CD8-positive, alpha-beta memory T cell (primary cell): ENCODE measurements at regions of chr7 and their contacts with region 1.

Region 1: DNA sequence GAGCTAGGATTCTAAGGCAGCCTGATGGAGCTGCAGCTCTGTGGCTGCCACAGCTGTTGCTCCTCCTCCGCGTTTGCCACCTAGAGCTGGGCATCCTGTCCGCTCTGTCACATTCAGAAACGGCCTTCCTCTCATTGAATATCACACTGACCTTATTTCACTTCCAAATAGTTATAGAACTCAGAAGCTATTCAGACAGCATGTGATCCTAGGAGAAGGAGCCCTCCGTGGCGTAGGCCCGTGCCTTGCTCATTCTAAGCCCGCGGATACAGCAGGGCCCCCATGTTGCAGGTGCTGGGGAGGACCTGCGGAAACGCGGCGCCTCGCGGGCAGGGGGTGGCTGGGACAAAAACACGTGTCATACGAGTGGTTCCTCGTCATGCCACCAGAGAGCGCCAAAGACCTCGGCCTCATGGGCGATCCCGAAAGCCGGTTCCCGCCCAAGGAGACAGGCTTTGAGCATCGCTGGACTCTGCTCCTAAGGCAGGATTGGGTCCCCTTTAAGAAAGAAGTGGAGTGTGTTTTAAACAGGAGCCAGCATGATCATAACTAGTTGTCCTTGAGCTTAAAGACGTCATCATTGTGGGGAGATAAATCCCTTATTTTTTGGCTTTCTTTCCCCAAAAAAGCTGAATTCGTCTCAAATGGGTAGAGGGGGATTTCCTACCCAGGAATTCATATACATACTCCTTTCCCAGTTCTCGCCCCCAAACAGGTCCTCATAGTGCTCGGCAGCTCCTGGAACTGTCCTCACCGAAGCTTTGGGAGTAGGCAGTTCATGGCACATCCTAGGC is 17.9 kb upstream of the FIGNL1 start:
- DNase-seq: peak; percentile 63 to 82 (median 65)
- H3K4me3 ChIP-seq: peak overlapping the region; percentile 15
- H3K4me3 Mint-ChIP-seq: peak overlapping the region in 6 of 7 donors; percentile 16 to 84 (median 67)
- H3K27ac ChIP-seq: no peak overlapping the region
- H3K27ac Mint-ChIP-seq: peak overlapping the region in 2 of 8 donors; percentile 70 to 95
- H3K4me1 ChIP-seq: peaks cover 5% of the 10 kb centered on the region
- H3K4me1 Mint-ChIP-seq: peaks cover 6 to 12% (median 11%) of the 10 kb centered on the region in 3 donors
- H3K27me3 ChIP-seq: no peaks in the 10 kb centered on the region
- H3K27me3 Mint-ChIP-seq: peaks cover 0 to 7% of the 10 kb centered on the region in 2 donors

Region 2: GRCh38 chr7:49776994-49777393 is 691.0 kb before region 1 on chr7:
- CTCF ChIA-PET with region 1: no interaction called
- POLR2A ChIA-PET with region 1: no interaction called
- DNase-seq: no peak
- H3K4me3 ChIP-seq: no peak overlapping the region
- H3K4me3 Mint-ChIP-seq: no peak overlapping the region
- H3K27ac ChIP-seq: no peak overlapping the region
- H3K27ac Mint-ChIP-seq: no peak overlapping the region
- H3K4me1 ChIP-seq: no peaks in the 10 kb centered on the region
- H3K4me1 Mint-ChIP-seq: peaks cover 4 to 6% (median 6%) of the 10 kb centered on the region in 3 donors
- H3K27me3 ChIP-seq: no peaks in the 10 kb centered on the region
- H3K27me3 Mint-ChIP-seq: peaks cover 25% of the 10 kb centered on the region in 2 donors

Region 3: DNA sequence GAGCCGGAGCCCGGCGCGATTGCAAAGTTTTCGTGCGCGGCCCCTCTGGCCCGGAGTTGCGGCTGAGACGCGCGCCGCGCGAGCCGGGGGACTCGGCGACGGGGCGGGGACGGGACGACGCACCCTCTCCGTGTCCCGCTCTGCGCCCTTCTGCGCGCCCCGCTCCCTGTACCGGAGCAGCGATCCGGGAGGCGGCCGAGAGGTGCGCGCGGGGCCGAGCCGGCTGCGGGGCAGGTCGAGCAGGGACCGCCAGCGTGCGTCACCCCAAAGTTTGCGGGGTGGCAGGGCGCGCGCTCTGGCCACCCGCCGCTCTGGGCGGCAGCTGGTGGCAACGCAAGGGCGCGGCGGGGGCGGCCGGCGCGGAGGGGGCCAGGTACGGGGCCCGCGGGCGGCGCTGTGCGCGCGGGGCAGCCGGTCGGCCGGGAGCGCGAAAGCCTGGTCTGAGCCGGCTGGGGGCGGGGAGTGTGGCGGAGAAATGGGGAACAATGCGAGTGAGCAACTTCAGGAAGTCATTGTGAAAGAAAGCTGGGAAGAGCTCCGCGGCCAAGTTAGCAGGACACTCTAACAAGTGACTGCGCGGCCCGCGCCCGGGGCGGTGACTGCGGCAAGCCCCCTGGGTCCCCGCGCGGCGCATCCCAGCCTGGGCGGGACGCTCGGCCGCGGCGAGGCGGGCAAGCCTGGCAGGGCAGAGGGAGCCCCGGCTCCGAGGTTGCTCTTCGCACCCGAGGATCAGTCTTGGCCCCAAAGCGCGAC is 163.7 kb before region 1 on chr7 and contains the start of gene IKZF1:
- CTCF ChIA-PET with region 1: no interaction called
- POLR2A ChIA-PET with region 1: no interaction called
- DNase-seq: peak; percentile 45 to 71 (median 53)
- H3K4me3 ChIP-seq: peak within 1 kb of the TSS; percentile 92
- H3K4me3 Mint-ChIP-seq: peak within 1 kb of the TSS; percentile 95 to 100 (median 99)
- H3K27ac ChIP-seq: peak within 1 kb of the TSS; percentile 86
- H3K27ac Mint-ChIP-seq: peak within 1 kb of the TSS; percentile 92 to 99 (median 98)
- H3K4me1 ChIP-seq: peaks cover 50% of the 10 kb centered on the region
- H3K4me1 Mint-ChIP-seq: peaks cover 44 to 60% (median 59%) of the 10 kb centered on the region in 3 donors
- H3K27me3 ChIP-seq: no peaks in the 10 kb centered on the region
- H3K27me3 Mint-ChIP-seq: peaks cover 0 to 2% of the 10 kb centered on the region in 2 donors
- total RNA-seq, gene IKZF1: 225 to 226 TPM

Region 4: GRCh38 chr7:50455658-50456057 is 12.4 kb before region 1 on chr7:
- CTCF ChIA-PET with region 1: interaction called, 14 read pairs
- POLR2A ChIA-PET with region 1: no interaction called
- DNase-seq: no peak
- H3K4me3 ChIP-seq: no peak overlapping the region
- H3K4me3 Mint-ChIP-seq: peak overlapping the region in 1 of 7 donors; percentile 67
- H3K27ac ChIP-seq: no peak overlapping the region
- H3K27ac Mint-ChIP-seq: peak overlapping the region in 2 of 8 donors; percentile 30 to 72
- H3K4me1 ChIP-seq: peaks cover 9% of the 10 kb centered on the region
- H3K4me1 Mint-ChIP-seq: peaks cover 6 to 12% (median 7%) of the 10 kb centered on the region in 3 donors
- H3K27me3 ChIP-seq: no peaks in the 10 kb centered on the region
- H3K27me3 Mint-ChIP-seq: peaks cover 6 to 8% of the 10 kb centered on the region in 2 donors

Region 5: DNA sequence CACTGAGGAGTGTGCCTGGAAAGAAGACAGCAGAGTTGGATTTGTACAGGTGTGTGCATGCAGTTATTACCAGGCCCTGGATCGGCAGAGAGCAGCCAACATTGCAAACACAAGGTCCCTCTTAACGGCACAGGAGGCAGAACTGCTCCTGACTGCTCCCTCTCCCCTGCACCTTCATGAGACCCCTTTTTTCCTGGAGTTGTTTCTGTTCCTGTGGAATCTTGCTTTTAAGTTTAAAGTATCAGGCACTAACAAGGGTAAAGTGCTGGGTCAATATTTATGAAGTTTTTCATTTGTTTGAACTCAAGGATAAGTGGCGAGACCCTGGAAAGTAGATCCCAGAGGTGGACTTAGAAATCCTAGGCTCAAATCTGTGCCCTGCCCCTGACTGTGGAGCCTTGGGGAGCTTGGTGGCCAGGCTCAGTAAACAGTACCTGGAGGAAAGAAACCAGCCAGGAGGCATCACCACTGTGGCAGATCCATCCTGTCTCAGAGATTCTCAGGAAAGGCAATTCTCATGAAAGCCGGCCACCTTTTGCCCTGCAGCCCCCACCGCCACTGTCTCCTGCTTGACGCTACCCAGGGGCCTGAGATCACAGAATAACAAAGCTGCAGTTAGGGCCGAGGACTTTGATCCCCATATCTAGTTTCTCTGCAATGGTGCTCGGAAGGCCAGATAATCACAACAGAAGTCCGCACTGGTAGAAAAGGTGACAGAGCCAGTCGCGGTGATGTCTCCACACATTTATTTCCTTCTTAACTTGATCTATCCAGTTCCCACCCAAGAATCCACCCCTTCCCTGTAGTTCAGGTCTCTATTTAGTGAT is 60.5 kb after region 1 on chr7:
- CTCF ChIA-PET with region 1: no interaction called
- POLR2A ChIA-PET with region 1: no interaction called
- DNase-seq: no peak
- H3K4me3 ChIP-seq: no peak overlapping the region
- H3K4me3 Mint-ChIP-seq: no peak overlapping the region
- H3K27ac ChIP-seq: no peak overlapping the region
- H3K27ac Mint-ChIP-seq: no peak overlapping the region
- H3K4me1 ChIP-seq: no peaks in the 10 kb centered on the region
- H3K4me1 Mint-ChIP-seq: no peaks in the 10 kb centered on the region
- H3K27me3 ChIP-seq: no peaks in the 10 kb centered on the region
- H3K27me3 Mint-ChIP-seq: peaks cover 7 to 30% of the 10 kb centered on the region in 2 donors

Region 6: DNA sequence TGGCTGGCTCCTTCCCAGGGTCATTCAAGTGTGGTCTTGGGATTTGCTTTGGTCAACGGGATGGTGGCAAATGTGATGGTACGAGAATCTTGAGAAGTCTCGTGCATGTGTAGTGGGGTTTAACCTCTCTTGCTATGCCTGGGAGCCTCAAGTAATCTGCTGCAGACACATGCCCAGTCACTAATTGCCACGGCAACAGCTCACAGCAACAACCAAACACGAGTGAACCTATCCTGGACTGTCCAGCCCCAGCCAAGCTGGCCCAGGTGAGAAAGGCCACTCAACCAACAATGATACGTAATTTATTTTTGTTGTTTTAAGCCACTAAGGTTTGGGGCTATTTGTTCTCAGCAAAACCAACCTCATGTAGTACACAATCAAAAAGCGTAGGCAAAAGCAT is 135.3 kb after region 1 on chr7:
- CTCF ChIA-PET with region 1: no interaction called
- POLR2A ChIA-PET with region 1: no interaction called
- DNase-seq: no peak
- H3K4me3 ChIP-seq: no peak overlapping the region
- H3K4me3 Mint-ChIP-seq: no peak overlapping the region
- H3K27ac ChIP-seq: no peak overlapping the region
- H3K27ac Mint-ChIP-seq: no peak overlapping the region
- H3K4me1 ChIP-seq: peaks cover 5% of the 10 kb centered on the region
- H3K4me1 Mint-ChIP-seq: peaks cover 9 to 15% (median 12%) of the 10 kb centered on the region in 3 donors
- H3K27me3 ChIP-seq: no peaks in the 10 kb centered on the region
- H3K27me3 Mint-ChIP-seq: no peaks in the 10 kb centered on the region

Region 7: DNA sequence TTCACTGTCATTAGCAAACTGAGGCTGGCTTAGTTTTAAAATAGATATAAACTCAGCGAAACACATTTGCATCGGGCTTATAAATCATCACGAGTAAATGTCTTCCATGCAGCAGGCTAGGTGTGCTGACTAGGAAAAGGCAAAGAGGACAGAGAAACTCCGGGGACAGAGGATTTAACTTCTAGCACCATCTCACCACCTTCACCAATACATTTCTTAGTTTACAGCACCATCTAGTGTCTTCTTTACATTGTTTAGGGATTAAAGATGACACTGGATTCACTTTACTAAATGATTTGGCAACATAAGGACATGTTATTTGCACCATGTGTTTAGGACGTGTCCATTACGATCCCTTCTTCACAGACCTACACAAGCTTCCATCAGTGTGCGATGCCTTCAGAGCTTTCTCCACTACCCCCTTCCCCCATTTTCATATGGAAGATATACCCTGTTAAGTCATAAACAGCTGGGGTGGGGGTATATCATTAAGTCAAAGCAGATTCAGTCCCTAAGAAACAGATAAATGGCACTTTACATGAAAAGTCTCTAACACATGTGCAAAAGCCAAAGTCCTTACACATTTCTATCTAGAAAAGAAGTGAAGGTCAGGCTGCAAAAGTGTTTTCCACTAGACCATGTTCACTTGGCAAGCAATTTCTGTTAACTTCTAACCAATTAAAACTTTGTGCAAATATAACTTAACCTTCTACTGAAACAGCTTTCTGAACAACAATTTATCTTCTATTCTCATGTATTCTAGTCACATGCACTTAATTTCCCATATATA is 211.4 kb after region 1 on chr7:
- CTCF ChIA-PET with region 1: interaction called, 87 read pairs
- POLR2A ChIA-PET with region 1: interaction called, 4 read pairs
- DNase-seq: peak in 2 of 5 donors; percentile 50 to 54
- H3K4me3 ChIP-seq: no peak overlapping the region
- H3K4me3 Mint-ChIP-seq: no peak overlapping the region
- H3K27ac ChIP-seq: no peak overlapping the region
- H3K27ac Mint-ChIP-seq: no peak overlapping the region
- H3K4me1 ChIP-seq: no peaks in the 10 kb centered on the region
- H3K4me1 Mint-ChIP-seq: peaks cover 0 to 3% (median 3%) of the 10 kb centered on the region in 3 donors
- H3K27me3 ChIP-seq: no peaks in the 10 kb centered on the region
- H3K27me3 Mint-ChIP-seq: peaks cover 6 to 27% of the 10 kb centered on the region in 2 donors

Region 8: DNA sequence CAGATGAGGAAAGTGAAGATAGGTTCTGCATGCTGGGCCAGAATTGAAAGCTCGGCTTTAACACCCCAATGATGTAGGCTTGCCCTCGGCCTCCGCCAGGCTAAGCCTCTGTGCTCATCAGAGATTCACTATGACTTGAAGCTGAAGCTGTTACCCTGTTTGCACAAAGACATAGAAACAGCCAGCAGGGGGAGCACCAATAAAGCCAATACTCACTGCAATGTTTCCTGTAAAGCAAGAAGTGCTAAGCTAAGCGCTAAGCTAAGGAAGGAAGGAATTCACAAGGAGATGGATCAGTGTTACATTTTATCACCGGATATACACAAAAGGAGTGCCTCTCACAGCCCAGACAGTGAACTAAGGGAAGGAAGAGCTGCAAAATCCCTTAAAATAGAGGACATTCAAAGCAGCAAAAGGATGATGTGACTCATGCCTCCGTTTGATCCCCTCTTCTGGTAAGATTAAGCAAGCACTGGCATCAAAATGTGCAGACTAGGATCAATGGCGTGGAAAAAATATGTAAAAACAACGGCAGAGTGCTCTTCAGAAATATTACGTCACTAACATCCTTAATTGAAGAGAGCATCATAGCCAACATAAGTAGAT is 694.8 kb after region 1 on chr7:
- CTCF ChIA-PET with region 1: interaction called, 12 read pairs
- POLR2A ChIA-PET with region 1: no interaction called
- DNase-seq: peak; percentile 16 to 56 (median 35)
- H3K4me3 ChIP-seq: no peak overlapping the region
- H3K4me3 Mint-ChIP-seq: no peak overlapping the region
- H3K27ac ChIP-seq: no peak overlapping the region
- H3K27ac Mint-ChIP-seq: no peak overlapping the region
- H3K4me1 ChIP-seq: no peaks in the 10 kb centered on the region
- H3K4me1 Mint-ChIP-seq: peaks cover 0 to 5% (median 1%) of the 10 kb centered on the region in 3 donors
- H3K27me3 ChIP-seq: no peaks in the 10 kb centered on the region
- H3K27me3 Mint-ChIP-seq: peaks cover 5 to 27% of the 10 kb centered on the region in 2 donors